B cell (primary cell): ENCODE measurements at regions of chr7 and their contacts with region 1.

Region 1: DNA sequence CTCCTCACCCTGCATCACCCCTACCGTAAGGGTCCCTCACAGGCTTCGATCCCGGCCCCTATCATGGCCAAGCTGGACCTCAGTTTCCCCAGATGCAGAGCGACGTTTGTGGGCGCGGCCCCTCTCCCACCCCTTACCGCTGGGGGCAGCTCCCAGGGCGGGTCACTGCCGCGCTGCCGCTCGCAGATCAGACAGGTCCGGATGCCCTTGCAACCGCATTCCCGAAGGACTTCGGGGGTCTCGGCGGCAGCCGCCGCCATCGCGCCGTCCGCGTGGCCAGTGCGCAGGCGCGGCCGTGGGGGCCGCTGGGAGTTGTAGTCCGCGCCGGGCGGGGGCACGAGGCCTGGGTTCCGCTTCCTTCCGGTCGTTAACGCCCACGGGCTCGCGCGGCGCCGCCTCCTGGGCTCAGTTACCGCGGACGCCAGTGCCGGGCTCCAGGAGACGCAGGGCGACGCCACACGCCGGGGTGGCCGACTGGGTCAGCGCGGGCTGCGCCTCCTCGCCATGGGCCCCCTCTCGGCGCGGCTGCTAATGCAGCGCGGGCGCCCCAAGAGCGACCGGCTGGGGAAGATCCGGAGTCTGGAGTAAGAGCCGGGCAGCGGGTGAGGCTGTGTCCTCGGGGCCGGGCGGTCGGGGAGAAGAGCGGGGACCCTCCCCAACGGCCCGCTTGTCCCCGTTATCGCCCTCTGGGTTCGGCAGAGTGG is at the starts of genes ALKBH4 and LRWD1:
- DNase-seq: peak; percentile 95
- ATAC-seq: peak; percentile 97
- H3K4me3 ChIP-seq: peak within 1 kb of the TSS; percentile 57 to 99 (median 94)
- H3K4me3 Mint-ChIP-seq: peak within 1 kb of the TSS; percentile 91
- H3K27ac ChIP-seq: peak within 1 kb of the TSS; percentile 44 to 70
- H3K27ac Mint-ChIP-seq: peak within 1 kb of the TSS; percentile 87
- H3K4me1 ChIP-seq: peaks cover 19 to 31% of the 10 kb centered on the region in 2 donors
- H3K4me1 Mint-ChIP-seq: peaks cover 30% of the 10 kb centered on the region
- H3K27me3 ChIP-seq: no peaks in the 10 kb centered on the region
- H3K27me3 Mint-ChIP-seq: no peaks in the 10 kb centered on the region
- CTCF ChIP-seq: peak; percentile 25
- total RNA-seq, gene ALKBH4: 8.6 and 11.0 TPM in 2 replicates
- total RNA-seq, gene LRWD1: 83.7 and 91.6 TPM in 2 replicates

Region 2: GRCh38 chr7:102286237-102287110 is 178.3 kb before region 1 on chr7 and contains the start of gene SH2B2:
- CTCF ChIA-PET with region 1: no interaction called
- POLR2A ChIA-PET with region 1: no interaction called
- intact Hi-C with region 1: loop called (anchors 5 kb)
- DNase-seq: peak; percentile 87
- ATAC-seq: peak; percentile 41
- H3K4me3 ChIP-seq: peak within 1 kb of the TSS; percentile 61 to 97 (median 90)
- H3K4me3 Mint-ChIP-seq: peak within 1 kb of the TSS; percentile 89
- H3K27ac ChIP-seq: peak within 1 kb of the TSS; percentile 50 to 74
- H3K27ac Mint-ChIP-seq: peak within 1 kb of the TSS; percentile 89
- H3K4me1 ChIP-seq: peaks cover 54 to 68% of the 10 kb centered on the region in 2 donors
- H3K4me1 Mint-ChIP-seq: peaks cover 65% of the 10 kb centered on the region
- H3K27me3 ChIP-seq: no peaks in the 10 kb centered on the region
- H3K27me3 Mint-ChIP-seq: no peaks in the 10 kb centered on the region
- CTCF ChIP-seq: no peak
- total RNA-seq, gene SH2B2: 41.2 and 47.7 TPM in 2 replicates

Region 3: GRCh38 chr7:102326157-102326889 is 138.4 kb before region 1 on chr7:
- CTCF ChIA-PET with region 1: no interaction called
- POLR2A ChIA-PET with region 1: no interaction called
- intact Hi-C with region 1: no loop called
- DNase-seq: no peak
- ATAC-seq: no peak
- H3K4me3 ChIP-seq: no peak overlapping the region
- H3K4me3 Mint-ChIP-seq: no peak overlapping the region
- H3K27ac ChIP-seq: no peak overlapping the region
- H3K27ac Mint-ChIP-seq: no peak overlapping the region
- H3K4me1 ChIP-seq: peaks cover 3 to 11% of the 10 kb centered on the region in 2 donors
- H3K4me1 Mint-ChIP-seq: peaks cover 26% of the 10 kb centered on the region
- H3K27me3 ChIP-seq: no peaks in the 10 kb centered on the region
- H3K27me3 Mint-ChIP-seq: no peaks in the 10 kb centered on the region
- CTCF ChIP-seq: no peak

Region 4: GRCh38 chr7:102404005-102404861 is 60.5 kb before region 1 on chr7:
- CTCF ChIA-PET with region 1: interaction called, 1,182 read pairs
- POLR2A ChIA-PET with region 1: interaction called, 6 read pairs
- intact Hi-C with region 1: no loop called
- DNase-seq: peak; percentile 81
- ATAC-seq: peak; percentile 86
- H3K4me3 ChIP-seq: no peak overlapping the region
- H3K4me3 Mint-ChIP-seq: no peak overlapping the region
- H3K27ac ChIP-seq: no peak overlapping the region
- H3K27ac Mint-ChIP-seq: no peak overlapping the region
- H3K4me1 ChIP-seq: peaks cover 20 to 28% of the 10 kb centered on the region in 2 donors
- H3K4me1 Mint-ChIP-seq: peaks cover 36% of the 10 kb centered on the region
- H3K27me3 ChIP-seq: no peaks in the 10 kb centered on the region
- H3K27me3 Mint-ChIP-seq: no peaks in the 10 kb centered on the region
- CTCF ChIP-seq: peak; percentile 87

Region 5: DNA sequence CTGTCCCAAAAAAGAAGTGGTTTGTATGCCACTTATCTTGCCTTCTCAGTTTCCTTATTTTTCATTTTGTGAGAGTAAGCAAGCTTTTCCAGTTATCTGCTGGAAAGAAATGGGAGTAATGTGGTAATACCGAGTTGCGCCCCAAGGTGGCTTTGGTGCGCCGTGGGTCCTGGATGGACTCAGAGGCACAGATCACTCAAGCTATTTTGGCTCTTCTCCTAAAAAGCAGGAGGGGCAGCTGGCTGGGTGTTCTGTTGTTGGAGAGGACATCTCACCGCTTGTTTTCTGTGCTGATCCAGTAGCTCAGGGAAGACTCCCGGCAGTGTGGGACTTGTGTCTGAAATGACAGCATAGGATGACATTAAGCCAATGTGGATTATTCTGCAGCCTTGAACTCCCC is 52.2 kb before region 1 on chr7:
- CTCF ChIA-PET with region 1: interaction called, 1,182 read pairs
- POLR2A ChIA-PET with region 1: interaction called, 11 read pairs
- intact Hi-C with region 1: no loop called
- DNase-seq: peak; percentile 67
- ATAC-seq: no peak
- H3K4me3 ChIP-seq: no peak overlapping the region
- H3K4me3 Mint-ChIP-seq: no peak overlapping the region
- H3K27ac ChIP-seq: no peak overlapping the region
- H3K27ac Mint-ChIP-seq: peak overlapping the region; percentile 34
- H3K4me1 ChIP-seq: peaks cover 58 to 76% of the 10 kb centered on the region in 2 donors
- H3K4me1 Mint-ChIP-seq: peaks cover 77% of the 10 kb centered on the region
- H3K27me3 ChIP-seq: no peaks in the 10 kb centered on the region
- H3K27me3 Mint-ChIP-seq: no peaks in the 10 kb centered on the region
- CTCF ChIP-seq: peak; percentile 68

Region 6: GRCh38 chr7:102883098-102883860 is 418.6 kb after region 1 on chr7:
- CTCF ChIA-PET with region 1: no interaction called
- POLR2A ChIA-PET with region 1: no interaction called
- intact Hi-C with region 1: no loop called
- DNase-seq: no peak
- ATAC-seq: no peak
- H3K4me3 ChIP-seq: no peak overlapping the region
- H3K4me3 Mint-ChIP-seq: no peak overlapping the region
- H3K27ac ChIP-seq: no peak overlapping the region
- H3K27ac Mint-ChIP-seq: no peak overlapping the region
- H3K4me1 ChIP-seq: no peaks in the 10 kb centered on the region
- H3K4me1 Mint-ChIP-seq: no peaks in the 10 kb centered on the region
- H3K27me3 ChIP-seq: no peaks in the 10 kb centered on the region
- H3K27me3 Mint-ChIP-seq: no peaks in the 10 kb centered on the region
- CTCF ChIP-seq: no peak